Sigmoid colon (tissue), 7 donors: ENCODE measurements at regions of chr4 and their contacts with region 1.

Region 1: DNA sequence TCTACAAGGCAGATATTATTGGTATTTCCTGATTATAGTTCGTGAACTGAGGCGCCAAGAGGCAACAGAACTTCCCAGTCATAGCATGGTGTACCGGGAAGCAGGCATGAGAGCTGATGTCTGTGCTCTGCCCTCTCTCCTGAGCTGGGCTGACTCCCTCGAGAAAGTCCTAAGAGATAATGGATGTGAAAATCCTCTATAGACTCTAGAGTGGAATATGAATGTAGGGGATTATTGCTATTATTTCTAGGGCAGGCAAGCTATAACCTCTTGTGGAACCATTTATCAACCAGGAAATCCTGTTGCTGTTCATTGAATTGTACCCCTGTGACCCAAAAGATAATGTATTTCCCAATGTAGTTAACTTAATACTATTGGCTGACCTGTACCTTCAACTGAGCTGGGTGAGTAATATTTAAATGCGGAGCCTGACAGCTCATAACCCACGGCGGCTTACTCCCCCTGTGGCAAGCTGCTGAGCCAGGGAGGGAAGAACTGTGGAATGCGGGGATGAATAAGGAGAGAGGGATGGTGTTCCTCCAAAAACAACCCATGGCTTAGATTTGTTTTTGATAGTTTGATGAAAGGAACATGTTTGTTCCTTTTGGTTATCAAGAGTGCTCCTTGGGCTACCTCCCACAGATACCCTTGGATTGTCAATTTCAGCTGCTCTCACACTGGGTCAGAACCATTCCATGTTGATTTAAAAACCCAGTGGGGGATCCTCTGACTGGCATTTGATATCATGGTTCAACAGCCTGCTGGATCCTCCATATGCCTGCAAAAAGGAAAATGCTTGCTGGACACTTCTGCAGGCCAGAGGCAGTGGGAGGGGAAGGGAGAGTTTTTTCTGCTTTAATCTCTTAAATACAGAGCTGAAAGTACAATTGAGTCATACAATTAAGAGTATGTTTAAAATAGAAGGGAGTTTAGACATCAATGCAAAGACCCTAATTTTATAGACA is 339.0 kb upstream of the BOD1L1 start:
- DNase-seq: no peak
- H3K4me3 ChIP-seq: no peak overlapping the region
- H3K27ac ChIP-seq: no peak overlapping the region
- H3K4me1 ChIP-seq: no peaks in the 10 kb centered on the region
- H3K27me3 ChIP-seq: no peaks in the 10 kb centered on the region
- CTCF ChIP-seq: no peak
- EP300 ChIP-seq: no peak
- POLR2A ChIP-seq: no peak

Region 2: DNA sequence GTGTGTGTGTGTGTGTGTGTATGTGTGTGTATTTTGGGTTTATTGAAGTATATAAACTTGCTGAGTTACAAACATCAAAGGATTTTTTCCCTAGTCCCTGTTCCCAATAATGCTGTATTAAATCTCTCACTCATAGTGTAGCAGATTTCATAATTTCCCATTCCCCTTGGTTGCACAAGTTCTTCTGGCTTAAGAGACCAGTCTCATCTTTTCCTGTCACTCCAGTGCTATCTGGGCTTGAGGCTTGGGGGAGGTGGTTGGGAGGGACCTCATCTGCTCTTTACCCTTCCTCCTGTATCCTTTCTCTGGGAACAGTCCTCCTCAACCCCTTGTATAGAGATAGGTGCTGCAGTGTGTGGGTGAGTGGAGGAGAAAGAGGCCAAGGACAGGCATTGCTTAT is 53.5 kb before region 1 on chr4:
- intact Hi-C with region 1: loop called (anchors 5 kb)
- DNase-seq: no peak
- H3K4me3 ChIP-seq: no peak overlapping the region
- H3K27ac ChIP-seq: no peak overlapping the region
- H3K4me1 ChIP-seq: peaks cover 0 to 4% (median 0%) of the 10 kb centered on the region in 4 donors
- H3K27me3 ChIP-seq: no peaks in the 10 kb centered on the region
- CTCF ChIP-seq: no peak
- EP300 ChIP-seq: no peak
- POLR2A ChIP-seq: no peak